ENCODE measurements at regions of chr7 and their contacts with region 1.

Region 1: GRCh38 chr7:130010689-130011412 is 40.3 kb downstream of the ZC3HC1 start:
- DNase-seq: peak; percentile 87
- ATAC-seq: peak; percentile 26; the same call in 1 of the 2 replicates
- H3K4me3 ChIP-seq: peak overlapping the region in 1 of 2 experiments; percentile 1; a peak in 1 of 4 replicates
- H3K27ac ChIP-seq: peak overlapping the region; percentile 89
- H3K4me1 ChIP-seq: peaks cover 36 to 45% of the 10 kb centered on the region in 2 experiments
- H3K27me3 ChIP-seq: no peaks in the 10 kb centered on the region
- CTCF ChIP-seq: peak in 2 of 3 experiments; percentile 91 to 96; a peak in 4 of 6 replicates
- POLR2A ChIP-seq: no peak
- RAD21 ChIP-seq: no peak

Region 2: DNA sequence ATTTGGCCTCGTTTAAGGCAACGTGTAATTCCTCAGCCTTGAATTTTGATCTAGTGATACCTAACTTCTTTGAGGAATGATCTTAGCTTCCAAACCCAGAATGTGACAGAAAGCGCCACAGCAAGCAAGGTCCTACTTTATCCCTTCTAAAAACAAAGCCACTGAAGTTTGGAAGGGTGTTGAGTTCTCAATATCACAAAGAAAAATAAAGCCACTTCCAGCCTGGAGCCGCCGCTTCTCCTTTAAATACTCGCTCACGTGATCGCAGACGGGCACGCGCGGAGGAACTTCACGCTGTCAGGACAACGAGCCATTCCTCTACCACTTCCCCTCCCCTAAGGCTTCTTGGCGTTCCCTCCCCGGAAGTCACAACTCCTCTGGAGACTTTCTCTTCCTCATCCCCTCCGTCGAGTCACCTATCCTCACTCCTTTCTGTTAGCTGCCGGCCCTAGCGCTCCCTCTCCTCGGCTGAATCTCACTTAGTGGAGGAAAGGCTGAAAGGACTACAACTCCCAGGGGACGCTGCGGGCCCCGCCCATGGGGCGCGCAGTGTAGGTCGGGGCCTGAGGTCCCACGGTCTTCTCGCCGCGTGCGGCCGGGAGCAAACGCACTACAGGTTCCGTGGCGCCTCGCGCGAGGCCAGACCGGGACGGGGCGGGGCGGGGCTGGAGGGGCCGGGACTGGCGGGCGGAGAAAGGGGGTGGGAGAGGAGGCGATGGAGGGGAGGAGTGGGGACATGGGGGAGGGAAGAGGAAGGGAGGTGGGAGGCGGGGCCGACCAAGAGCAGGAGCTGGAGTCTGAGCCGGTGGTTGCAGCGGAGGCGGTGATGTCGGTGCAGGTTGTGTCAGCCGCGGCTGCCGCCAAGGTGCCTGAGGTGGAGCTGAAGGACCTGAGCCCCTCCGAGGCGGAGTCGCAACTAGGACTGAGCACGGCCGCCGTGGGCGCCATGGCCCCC is 786.3 kb before region 1 on chr7 and contains the start of gene AHCYL2:
- CTCF ChIA-PET with region 1: no interaction called
- POLR2A ChIA-PET with region 1: no interaction called
- RAD21 ChIA-PET with region 1: no interaction called
- intact Hi-C with region 1: loop called (anchors 2 kb)
- DNase-seq: peak; percentile 95
- ATAC-seq: peak; percentile 94
- H3K4me3 ChIP-seq: peak within 1 kb of the TSS; percentile 80 to 94
- H3K27ac ChIP-seq: peak within 1 kb of the TSS; percentile 71
- H3K4me1 ChIP-seq: peaks cover 9 to 24% of the 10 kb centered on the region in 2 experiments; a peak in 3 of 4 replicates
- H3K27me3 ChIP-seq: no peaks in the 10 kb centered on the region
- CTCF ChIP-seq: no peak
- POLR2A ChIP-seq: peak; percentile 43
- RAD21 ChIP-seq: no peak
- total RNA-seq, gene AHCYL2: 17.0 TPM

Region 3: GRCh38 chr7:129664029-129665012 is 346.5 kb before region 1 on chr7:
- CTCF ChIA-PET with region 1: interaction called, 5 read pairs
- POLR2A ChIA-PET with region 1: no interaction called
- RAD21 ChIA-PET with region 1: no interaction called
- intact Hi-C with region 1: loop called (anchors 1 kb)
- DNase-seq: peak; percentile 45
- ATAC-seq: peak; percentile 66
- H3K4me3 ChIP-seq: 0 out of 4 replicates have a peak overlapping the region, but pooled peaks of 1 of the 2 experiments have one; percentile 7
- H3K27ac ChIP-seq: peak overlapping the region; percentile 54
- H3K4me1 ChIP-seq: peaks cover 16 to 30% of the 10 kb centered on the region in 2 experiments
- H3K27me3 ChIP-seq: no peaks in the 10 kb centered on the region
- CTCF ChIP-seq: peak; percentile 43 to 92 (median 66); a peak in 5 of 6 replicates
- POLR2A ChIP-seq: no peak
- RAD21 ChIP-seq: peak; percentile 94

Region 4: GRCh38 chr7:129780257-129780973 is 230.4 kb before region 1 on chr7:
- CTCF ChIA-PET with region 1: no interaction called
- POLR2A ChIA-PET with region 1: no interaction called
- RAD21 ChIA-PET with region 1: no interaction called
- intact Hi-C with region 1: loop called (anchors 2 kb)
- DNase-seq: peak; percentile 75
- ATAC-seq: peak; percentile 79
- H3K4me3 ChIP-seq: peak overlapping the region; percentile 84 to 87
- H3K27ac ChIP-seq: peak overlapping the region; percentile 94
- H3K4me1 ChIP-seq: peaks cover 20 to 29% of the 10 kb centered on the region in 2 experiments
- H3K27me3 ChIP-seq: no peaks in the 10 kb centered on the region
- CTCF ChIP-seq: no peak
- POLR2A ChIP-seq: no peak
- RAD21 ChIP-seq: no peak

Region 5: GRCh38 chr7:129952653-129953560 is 57.9 kb before region 1 on chr7 and contains the start of gene UBE2H:
- CTCF ChIA-PET with region 1: interaction called, 8 read pairs
- POLR2A ChIA-PET with region 1: interaction called, 12 read pairs
- RAD21 ChIA-PET with region 1: interaction called in 1 of 2 experiments, 7 read pairs
- intact Hi-C with region 1: loop called (anchors 1 kb)
- DNase-seq: peak; percentile 83
- ATAC-seq: peak; percentile 72
- H3K4me3 ChIP-seq: peak within 1 kb of the TSS; percentile 77 to 87
- H3K27ac ChIP-seq: peak within 1 kb of the TSS; percentile 81
- H3K4me1 ChIP-seq: peaks cover 35 to 55% of the 10 kb centered on the region in 2 experiments
- H3K27me3 ChIP-seq: no peaks in the 10 kb centered on the region
- CTCF ChIP-seq: no peak
- POLR2A ChIP-seq: peak; percentile 52
- RAD21 ChIP-seq: no peak
- total RNA-seq, gene UBE2H: 117 TPM

Region 6: DNA sequence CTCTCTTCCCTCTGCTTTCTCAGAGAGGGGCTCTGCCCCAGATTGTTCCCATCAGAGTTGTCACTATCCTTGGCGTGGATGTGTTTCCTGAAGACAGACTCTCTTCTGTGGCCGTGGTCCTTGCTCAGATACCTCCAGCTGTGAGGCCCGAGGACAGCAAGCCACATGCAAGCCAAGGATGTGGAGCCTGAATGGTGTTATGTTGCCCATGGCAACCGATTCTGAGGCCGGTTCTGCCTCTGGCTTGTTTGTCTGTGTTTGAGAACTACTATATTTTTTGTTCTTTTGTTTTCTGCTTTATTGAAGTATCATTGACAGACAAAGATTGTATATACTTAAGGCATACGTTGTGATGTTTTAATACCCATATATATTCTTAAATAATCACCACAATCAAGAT is 1793.0 kb after region 1 on chr7:
- CTCF ChIA-PET with region 1: no interaction called
- POLR2A ChIA-PET with region 1: no interaction called
- RAD21 ChIA-PET with region 1: no interaction called
- intact Hi-C with region 1: no loop called
- DNase-seq: no peak
- ATAC-seq: no peak
- H3K4me3 ChIP-seq: no peak overlapping the region
- H3K27ac ChIP-seq: no peak overlapping the region
- H3K4me1 ChIP-seq: no peaks in the 10 kb centered on the region
- H3K27me3 ChIP-seq: peaks cover 21% of the 10 kb centered on the region
- CTCF ChIP-seq: no peak
- POLR2A ChIP-seq: no peak
- RAD21 ChIP-seq: no peak